Heart right ventricle (tissue), 16 donors: ENCODE measurements at regions of chr6 and their contacts with region 1.

Region 1: DNA sequence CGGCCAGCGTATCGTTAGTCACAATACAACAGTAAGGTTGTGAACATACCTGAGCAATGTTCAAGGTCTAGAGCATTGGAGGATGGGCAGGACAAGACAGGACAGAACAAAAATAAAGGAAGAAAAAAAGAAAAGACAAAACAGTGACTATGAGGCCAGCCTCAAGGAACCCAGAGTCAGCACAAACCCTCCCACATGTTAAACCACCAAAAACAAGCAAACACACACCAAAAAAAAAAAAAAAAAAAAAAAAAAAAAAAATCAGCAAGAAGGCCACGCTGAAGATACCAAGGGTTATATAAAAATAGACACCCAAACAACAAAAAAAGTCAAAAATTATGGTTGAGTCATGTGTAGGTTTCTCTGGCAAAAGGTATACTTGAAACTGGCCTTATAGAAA is 12.8 kb downstream of the MED23 start:
- DNase-seq: no peak
- ATAC-seq: no peak
- H3K4me3 ChIP-seq: no peak overlapping the region
- H3K27ac ChIP-seq: no peak overlapping the region
- H3K4me1 ChIP-seq: no peaks in the 10 kb centered on the region
- H3K27me3 ChIP-seq: no peaks in the 10 kb centered on the region
- CTCF ChIP-seq: no peak

Region 2: GRCh38 chr6:131199568-131200272 is 415.6 kb before region 1 on chr6:
- intact Hi-C with region 1: loop called in 1 of 10 experiments (anchors 10 kb)
- DNase-seq: peak in 1 of 2 donors; percentile 13
- ATAC-seq: peak in 7 of 8 donors; percentile 61 to 84 (median 80)
- H3K4me3 ChIP-seq: peak overlapping the region in 1 of 10 donors; percentile 23
- H3K27ac ChIP-seq: peak overlapping the region in 1 of 10 donors; percentile 77
- H3K4me1 ChIP-seq: peaks cover 0 to 7% (median 0%) of the 10 kb centered on the region in 9 donors
- H3K27me3 ChIP-seq: no peaks in the 10 kb centered on the region
- CTCF ChIP-seq: peak in 8 of 9 donors; percentile 41 to 73 (median 65)

Region 3: GRCh38 chr6:131640100-131640499 is 24.8 kb after region 1 on chr6:
- intact Hi-C with region 1: no loop called
- DNase-seq: no peak
- ATAC-seq: no peak
- H3K4me3 ChIP-seq: no peak overlapping the region
- H3K27ac ChIP-seq: no peak overlapping the region
- H3K4me1 ChIP-seq: no peaks in the 10 kb centered on the region
- H3K27me3 ChIP-seq: no peaks in the 10 kb centered on the region
- CTCF ChIP-seq: no peak

Region 4: GRCh38 chr6:131966443-131966842 is 351.2 kb after region 1 on chr6:
- intact Hi-C with region 1: no loop called
- DNase-seq: no peak
- ATAC-seq: no peak
- H3K4me3 ChIP-seq: no peak overlapping the region
- H3K27ac ChIP-seq: no peak overlapping the region
- H3K4me1 ChIP-seq: no peaks in the 10 kb centered on the region
- H3K27me3 ChIP-seq: no peaks in the 10 kb centered on the region
- CTCF ChIP-seq: no peak